ENCODE measurements at regions of chr16 and their contacts with region 1.

Region 1: GRCh38 chr16:31073968-31074813 is at the starts of genes ZNF646 and ZNF668:
- DNase-seq: peak; percentile 99
- H3K4me3 ChIP-seq: peak within 1 kb of the TSS; percentile 90 to 91
- H3K27ac ChIP-seq: peak within 1 kb of the TSS; percentile 89 to 95
- H3K4me1 ChIP-seq: peaks cover 0 to 32% (median 23%) of the 10 kb centered on the region in 4 donors
- H3K27me3 ChIP-seq: no peaks in the 10 kb centered on the region
- CTCF ChIP-seq: no peak

Region 2: GRCh38 chr16:31032736-31033708 is 41.2 kb before region 1 on chr16 and contains the start of gene STX4:
- intact Hi-C with region 1: loop called (anchors 2 kb)
- DNase-seq: peak; percentile 97 to 98
- H3K4me3 ChIP-seq: peak within 1 kb of the TSS; percentile 83 to 99
- H3K27ac ChIP-seq: peak within 1 kb of the TSS; percentile 92 to 93
- H3K4me1 ChIP-seq: peaks cover 0 to 22% (median 12%) of the 10 kb centered on the region in 4 donors
- H3K27me3 ChIP-seq: no peaks in the 10 kb centered on the region
- CTCF ChIP-seq: peak in 1 of 2 experiments; percentile 5

Region 3: DNA sequence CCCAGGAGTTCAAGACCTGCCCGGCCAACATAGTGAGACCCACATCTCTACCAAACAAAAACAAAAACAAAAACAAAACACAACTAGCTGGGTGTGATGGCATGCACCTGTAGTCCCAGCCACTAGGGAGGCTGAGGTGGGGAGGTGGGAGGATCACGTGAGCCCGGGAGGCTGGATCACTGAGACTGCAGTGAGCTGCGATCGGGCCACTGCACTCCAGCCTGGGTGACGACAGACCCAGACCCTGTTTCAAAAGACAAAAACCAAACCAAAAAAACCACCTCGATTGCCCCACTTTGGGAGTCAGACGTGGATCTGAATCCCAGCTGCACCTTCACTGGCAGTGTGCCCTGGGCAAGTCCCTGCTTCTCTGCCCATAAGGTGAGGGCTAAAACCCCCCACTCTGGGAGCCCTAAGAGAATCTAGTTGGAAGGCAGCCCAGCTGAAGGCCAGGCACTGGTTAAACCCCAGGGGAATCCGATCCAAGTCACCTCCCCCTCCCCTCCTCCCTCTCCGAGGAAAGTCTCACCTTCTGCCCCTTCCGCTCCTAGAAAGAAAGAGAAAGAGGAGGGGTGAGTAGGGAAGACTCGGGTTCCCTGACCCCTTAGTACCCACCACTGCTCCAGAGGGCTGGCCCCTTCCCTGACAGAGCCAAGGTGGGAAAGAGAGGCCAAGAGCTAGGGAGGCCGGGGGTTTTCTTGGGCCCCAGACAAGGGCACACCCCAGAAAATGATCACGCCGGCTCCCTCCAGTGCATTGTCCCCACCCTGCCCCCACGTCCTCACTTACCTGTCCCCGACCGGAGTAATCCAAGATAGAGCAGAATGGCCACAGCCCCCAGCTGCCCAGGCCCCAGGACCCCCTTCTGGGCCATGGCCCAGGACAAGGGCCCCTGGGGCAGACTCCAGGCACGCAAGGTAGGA is 60.7 kb after region 1 on chr16:
- intact Hi-C with region 1: no loop called
- DNase-seq: peak in 1 of 2 donors; percentile 50
- H3K4me3 ChIP-seq: no peak overlapping the region
- H3K27ac ChIP-seq: no peak overlapping the region
- H3K4me1 ChIP-seq: peaks cover 0 to 28% (median 5%) of the 10 kb centered on the region in 4 donors
- H3K27me3 ChIP-seq: peaks cover 0 to 14% of the 10 kb centered on the region in 2 donors
- CTCF ChIP-seq: no peak

Region 4: DNA sequence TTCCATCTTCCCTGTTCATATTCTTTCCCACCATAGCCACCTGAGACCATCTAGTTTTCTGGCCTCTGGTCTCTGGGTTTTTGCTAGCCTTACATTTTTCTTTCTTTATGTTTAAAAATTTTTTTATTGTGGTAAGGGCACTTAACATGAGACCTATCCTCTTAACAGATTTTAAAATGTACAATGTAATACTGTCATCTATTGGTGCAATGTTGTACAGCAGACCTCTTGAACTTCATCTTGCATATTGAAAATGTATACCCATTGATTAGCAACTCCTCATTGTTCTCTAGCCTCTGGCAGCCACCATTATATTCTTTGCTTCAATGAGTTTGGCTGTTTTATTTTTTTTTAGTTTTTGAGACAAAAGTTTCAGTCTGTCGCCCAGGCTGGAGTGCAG is 224.8 kb after region 1 on chr16:
- intact Hi-C with region 1: no loop called
- DNase-seq: no peak
- H3K4me3 ChIP-seq: no peak overlapping the region
- H3K27ac ChIP-seq: no peak overlapping the region
- H3K4me1 ChIP-seq: peaks cover 0 to 10% (median 0%) of the 10 kb centered on the region in 4 donors
- H3K27me3 ChIP-seq: peaks cover 0 to 4% of the 10 kb centered on the region in 2 donors
- CTCF ChIP-seq: no peak

Region 5: GRCh38 chr16:31440516-31441184 is 366.5 kb after region 1 on chr16:
- intact Hi-C with region 1: loop called (anchors 10 kb)
- DNase-seq: peak in 1 of 2 donors; percentile 31
- H3K4me3 ChIP-seq: no peak overlapping the region
- H3K27ac ChIP-seq: no peak overlapping the region
- H3K4me1 ChIP-seq: peaks cover 0 to 11% (median 3%) of the 10 kb centered on the region in 4 donors
- H3K27me3 ChIP-seq: no peaks in the 10 kb centered on the region
- CTCF ChIP-seq: no peak

Measured in tibial artery (tissue), 4 donors.